HEK293 (cell line): ENCODE measurements at regions of chr2 and their contacts with region 1.

Region 1: DNA sequence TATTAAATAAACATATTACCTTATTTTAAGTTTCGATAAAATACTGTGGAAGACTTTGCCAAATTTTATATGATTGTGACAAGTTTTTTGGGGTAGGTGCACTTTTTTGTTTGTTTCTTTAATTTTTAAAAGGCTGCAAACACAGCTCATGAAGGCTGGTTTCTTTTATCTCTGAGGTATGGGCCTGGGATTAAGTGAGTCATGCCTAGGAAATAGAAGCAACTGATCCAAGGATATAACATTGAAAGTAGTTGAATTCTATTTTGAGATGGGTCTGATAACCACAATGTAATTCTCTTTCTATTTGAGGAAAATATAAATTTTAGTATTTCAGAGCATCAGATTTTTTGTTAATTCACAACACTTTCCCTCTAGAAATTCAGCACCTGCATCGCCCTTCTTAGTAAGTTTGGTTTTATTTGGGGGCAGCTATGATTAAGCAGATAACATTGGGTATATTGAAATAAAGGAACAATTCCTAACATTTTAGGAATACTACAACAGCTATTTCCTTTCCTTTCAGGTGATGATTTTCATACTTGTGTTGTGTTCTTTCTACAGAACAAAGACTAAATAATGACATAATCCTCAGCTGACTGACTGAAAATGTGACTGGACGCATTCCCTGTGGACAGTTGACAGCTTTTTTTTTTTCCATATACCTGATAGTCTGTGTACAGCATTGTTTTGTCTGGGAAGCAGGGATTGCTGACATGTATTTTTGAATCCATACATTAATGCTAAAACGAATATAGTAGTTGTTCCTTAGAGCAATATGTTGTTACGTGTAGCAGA is 16.8 kb downstream of the RBM45 start:
- H3K4me3 ChIP-seq: no peak overlapping the region
- H3K27ac ChIP-seq: no peak overlapping the region
- H3K4me1 ChIP-seq: no peaks in the 10 kb centered on the region
- CTCF ChIP-seq: no peak

Region 2: DNA sequence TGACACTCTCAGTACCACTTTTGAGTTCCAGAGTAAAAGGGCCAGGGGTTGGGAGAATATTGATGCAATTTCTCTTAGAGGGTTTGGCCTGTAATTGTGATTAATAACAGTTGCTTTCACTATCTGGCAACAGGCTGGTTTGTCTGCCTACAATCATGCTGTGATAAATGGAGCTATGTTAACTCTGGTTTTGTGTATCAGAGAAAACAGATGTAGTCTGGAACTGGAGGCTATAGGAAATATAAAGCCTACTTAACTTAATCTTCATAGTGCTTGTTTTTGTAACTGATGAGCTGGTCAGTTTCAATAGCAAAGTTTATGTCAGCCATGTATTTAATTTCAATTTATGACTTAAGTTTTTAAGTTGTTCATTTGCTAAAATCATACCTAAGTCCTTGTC is 598.5 kb before region 1 on chr2:
- CTCF ChIA-PET with region 1: no interaction called
- POLR2A ChIA-PET with region 1: no interaction called
- H3K4me3 ChIP-seq: no peak overlapping the region
- H3K27ac ChIP-seq: no peak overlapping the region
- H3K4me1 ChIP-seq: no peaks in the 10 kb centered on the region
- CTCF ChIP-seq: no peak

Region 3: DNA sequence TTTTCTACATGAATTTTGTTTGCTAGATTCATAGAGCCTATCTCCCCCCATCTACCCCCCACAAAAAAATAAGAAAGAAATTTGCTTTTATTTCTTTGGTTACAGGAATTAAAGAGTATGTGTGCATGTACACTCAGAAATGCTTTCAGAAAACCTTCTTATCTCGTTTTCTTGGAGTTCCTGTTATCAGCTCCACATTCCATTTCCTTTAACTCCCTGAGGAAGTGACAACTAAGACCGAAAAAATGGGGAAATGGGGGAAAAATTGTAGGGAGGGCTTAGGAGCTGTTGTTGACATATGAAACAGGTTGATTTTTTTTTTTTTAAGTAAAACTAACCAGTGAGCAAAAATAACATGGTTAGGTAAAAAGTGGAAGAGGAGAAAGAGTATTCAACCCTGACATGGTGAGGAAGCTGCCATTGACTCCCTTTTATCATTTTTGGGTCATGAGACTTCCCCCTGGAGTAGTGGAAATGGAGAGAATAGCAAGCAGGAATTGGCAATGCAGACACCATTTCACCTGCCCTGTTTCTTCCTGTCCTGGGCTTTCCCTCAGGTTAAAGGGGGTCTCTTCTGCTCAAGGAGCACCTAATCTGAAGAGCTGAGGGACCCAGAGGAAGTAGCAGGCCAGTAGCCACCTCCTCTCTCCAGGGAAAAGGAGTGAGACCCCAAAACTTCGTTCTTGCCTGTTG is 158.8 kb after region 1 on chr2:
- CTCF ChIA-PET with region 1: no interaction called
- POLR2A ChIA-PET with region 1: no interaction called
- H3K4me3 ChIP-seq: no peak overlapping the region
- H3K27ac ChIP-seq: no peak overlapping the region
- H3K4me1 ChIP-seq: no peaks in the 10 kb centered on the region
- CTCF ChIP-seq: no peak

Region 4: GRCh38 chr2:178397002-178397605 is 268.1 kb after region 1 on chr2:
- CTCF ChIA-PET with region 1: interaction called, 21 read pairs
- POLR2A ChIA-PET with region 1: no interaction called
- H3K4me3 ChIP-seq: no peak overlapping the region
- H3K27ac ChIP-seq: no peak overlapping the region
- H3K4me1 ChIP-seq: no peaks in the 10 kb centered on the region
- CTCF ChIP-seq: peak; percentile 18; the same call in 1 of the 2 replicates